Activated T-helper 1 cell treated with anti-CD3 and anti-CD28 coated beads, Interleukin-12 subunit alpha, Interleukin-12 subunit beta, Interleukin-2, Interleukin-4 antibody, amounts not matched to agents 30 ng/mL and 10 ng/mL and 1 ng/mL, durations not matched to agents 14 hours and 24 hours and 36 hours (primary cell): ENCODE measurements at regions of chr1 and their contacts with region 1.

Region 1: GRCh38 chr1:91021686-91022517 is at the start of gene ZNF644:
- DNase-seq: peak; percentile 87
- H3K4me3 Mint-ChIP-seq: peak within 1 kb of the TSS; percentile 92
- H3K27ac Mint-ChIP-seq: peak within 1 kb of the TSS; percentile 99
- H3K4me1 Mint-ChIP-seq: peaks cover 48% of the 10 kb centered on the region
- H3K27me3 Mint-ChIP-seq: peaks cover 2% of the 10 kb centered on the region
- total RNA-seq, gene ZNF644: 60.4 and 68.7 TPM in 2 replicates

Region 2: GRCh38 chr1:90721210-90722194 is 300.4 kb before region 1 on chr1:
- intact Hi-C with region 1: loop called (anchors 10 kb)
- DNase-seq: peak; percentile 35
- H3K4me3 Mint-ChIP-seq: no peak overlapping the region
- H3K27ac Mint-ChIP-seq: peak overlapping the region; percentile 31
- H3K4me1 Mint-ChIP-seq: peaks cover 32% of the 10 kb centered on the region
- H3K27me3 Mint-ChIP-seq: peaks cover 85% of the 10 kb centered on the region

Region 3: GRCh38 chr1:90879281-90879680 is 142.6 kb before region 1 on chr1:
- intact Hi-C with region 1: no loop called
- DNase-seq: no peak
- H3K4me3 Mint-ChIP-seq: no peak overlapping the region
- H3K27ac Mint-ChIP-seq: no peak overlapping the region
- H3K4me1 Mint-ChIP-seq: no peaks in the 10 kb centered on the region
- H3K27me3 Mint-ChIP-seq: peaks cover 3% of the 10 kb centered on the region

Region 4: DNA sequence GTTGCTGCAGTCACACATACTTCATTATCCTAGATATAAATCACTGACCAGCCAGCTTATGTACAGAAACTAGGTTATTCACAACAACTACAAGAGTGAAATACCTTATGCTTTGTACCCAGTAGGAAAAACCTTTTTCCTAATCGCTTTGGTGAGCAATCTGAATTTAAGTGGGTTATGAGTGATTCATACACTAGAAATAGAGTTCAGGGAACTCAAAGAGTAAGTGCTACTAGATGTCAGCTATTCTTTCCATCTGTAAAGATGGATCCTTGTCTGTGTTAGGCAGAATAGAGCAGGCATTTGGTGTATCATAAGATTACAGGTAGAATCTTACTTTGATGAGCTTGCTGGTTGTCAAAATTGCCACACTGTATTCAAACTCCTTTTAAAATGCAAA is 102.0 kb before region 1 on chr1:
- intact Hi-C with region 1: loop called (anchors 5 kb)
- DNase-seq: no peak
- H3K4me3 Mint-ChIP-seq: no peak overlapping the region
- H3K27ac Mint-ChIP-seq: no peak overlapping the region
- H3K4me1 Mint-ChIP-seq: peaks cover 41% of the 10 kb centered on the region
- H3K27me3 Mint-ChIP-seq: no peaks in the 10 kb centered on the region

Region 5: DNA sequence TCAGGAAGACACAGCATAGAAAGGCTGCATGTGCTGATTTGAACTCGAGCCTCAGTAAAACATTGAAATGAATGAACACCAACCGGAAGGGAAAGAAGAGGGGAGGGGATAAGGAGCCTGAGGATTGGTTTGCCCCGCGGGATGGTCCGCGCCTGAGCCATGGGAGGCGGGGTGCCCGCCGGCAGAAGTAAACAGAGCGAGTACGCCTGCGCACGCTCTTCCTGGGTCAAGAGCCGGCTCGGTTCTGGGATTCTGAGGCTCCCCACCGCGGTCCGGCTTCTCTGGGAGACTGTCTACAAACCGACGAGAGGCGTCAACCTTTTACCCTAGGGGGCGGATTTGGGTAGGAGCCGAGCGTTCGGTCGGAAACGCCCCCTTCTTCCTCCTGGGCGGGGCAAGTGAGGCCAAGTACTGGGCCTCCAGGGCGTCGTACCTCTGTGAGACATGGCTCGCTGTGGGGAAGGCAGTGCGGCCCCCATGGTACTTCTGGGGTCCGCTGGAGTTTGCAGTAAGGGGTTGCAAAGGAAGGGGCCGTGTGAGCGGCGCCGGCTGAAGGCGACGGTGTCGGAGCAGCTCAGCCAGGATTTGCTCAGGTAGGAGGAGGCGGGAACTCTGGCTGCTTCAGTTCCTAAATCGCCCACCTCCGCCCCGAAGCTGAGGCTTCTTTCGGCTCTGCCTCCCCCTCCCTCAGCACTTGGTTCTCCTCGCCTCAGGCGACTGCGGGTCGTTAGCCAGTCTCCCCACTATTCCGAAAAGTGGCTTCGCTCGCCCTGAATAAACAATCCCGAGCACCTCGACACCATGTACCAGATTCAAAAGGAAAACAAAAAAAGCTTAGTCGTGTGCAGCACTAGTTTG is 1058.5 kb after region 1 on chr1 and contains the start of gene BTBD8:
- intact Hi-C with region 1: loop called (anchors 5 kb)
- DNase-seq: peak; percentile 79
- H3K4me3 Mint-ChIP-seq: peak within 1 kb of the TSS; percentile 86
- H3K27ac Mint-ChIP-seq: peak within 1 kb of the TSS; percentile 85
- H3K4me1 Mint-ChIP-seq: peaks cover 13% of the 10 kb centered on the region
- H3K27me3 Mint-ChIP-seq: no peaks in the 10 kb centered on the region
- total RNA-seq, gene BTBD8: 0.91 and 1.0 TPM in 2 replicates

Region 6: DNA sequence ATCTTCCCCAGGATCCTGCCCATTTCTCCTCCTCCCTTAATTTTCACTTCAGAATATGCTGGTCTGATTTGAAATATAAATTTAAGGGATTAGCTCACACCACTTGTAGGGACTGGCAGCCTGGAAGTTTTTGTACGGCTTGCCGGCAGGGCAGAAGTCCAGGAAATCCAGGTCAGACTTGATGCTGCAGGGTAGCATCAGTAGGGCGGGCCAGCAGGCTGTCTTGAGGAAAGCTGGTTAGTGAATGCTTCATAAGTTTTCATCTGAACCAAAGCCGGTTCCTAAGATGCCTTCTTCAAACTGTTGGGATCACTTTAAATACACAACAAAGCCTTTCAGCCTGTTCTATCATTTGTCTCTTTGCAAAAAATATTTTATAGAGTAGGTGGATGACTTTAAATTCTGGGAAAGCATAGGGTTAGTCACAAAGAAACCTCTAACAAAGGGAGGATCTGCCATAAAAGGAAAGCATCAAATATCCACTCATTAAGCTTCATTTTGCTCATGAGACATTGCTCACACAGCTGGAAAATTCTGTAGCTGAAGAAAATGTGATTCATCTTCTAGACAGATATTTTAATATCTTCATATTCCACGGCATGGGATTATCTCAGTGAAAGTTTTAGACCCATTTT is 1555.5 kb after region 1 on chr1:
- intact Hi-C with region 1: loop called (anchors 10 kb)
- DNase-seq: no peak
- H3K4me3 Mint-ChIP-seq: peak overlapping the region; percentile 89
- H3K27ac Mint-ChIP-seq: peak overlapping the region; percentile 75
- H3K4me1 Mint-ChIP-seq: peaks cover 81% of the 10 kb centered on the region
- H3K27me3 Mint-ChIP-seq: no peaks in the 10 kb centered on the region